ENCODE measurements at regions of chr11 and their contacts with region 1.

Region 1: GRCh38 chr11:43557553-43558110 is 122.9 kb upstream of the HSD17B12 start:
- DNase-seq: peak in 1 of 2 donors; percentile 56
- H3K4me3 ChIP-seq: no peak overlapping the region
- CTCF ChIP-seq: no peak
- POLR2A ChIP-seq: no peak

Region 2: GRCh38 chr11:42571131-42571877 is 986.3 kb before region 1 on chr11:
- intact Hi-C with region 1: no loop called
- DNase-seq: no peak
- H3K4me3 ChIP-seq: no peak overlapping the region
- CTCF ChIP-seq: no peak
- POLR2A ChIP-seq: no peak

Region 3: GRCh38 chr11:43503417-43503816 is 54.2 kb before region 1 on chr11:
- intact Hi-C with region 1: no loop called
- DNase-seq: no peak
- H3K4me3 ChIP-seq: no peak overlapping the region
- CTCF ChIP-seq: no peak
- POLR2A ChIP-seq: no peak

Region 4: GRCh38 chr11:43747130-43747802 is 189.6 kb after region 1 on chr11:
- intact Hi-C with region 1: no loop called
- DNase-seq: no peak
- H3K4me3 ChIP-seq: no peak overlapping the region
- CTCF ChIP-seq: no peak
- POLR2A ChIP-seq: no peak

Region 5: GRCh38 chr11:43852057-43852636 is 294.5 kb after region 1 on chr11:
- intact Hi-C with region 1: loop called (anchors 5 kb)
- DNase-seq: peak in 1 of 2 donors; percentile 51
- H3K4me3 ChIP-seq: no peak overlapping the region
- CTCF ChIP-seq: peak in 1 of 3 donors; percentile 17
- POLR2A ChIP-seq: no peak

Measured in lower leg skin (tissue), 4 donors.